ENCODE measurements at regions of chr14 and their contacts with region 1.

Region 1: GRCh38 chr14:34714320-34715126 is at the start of gene CFL2:
- DNase-seq: peak; percentile 72 to 86 (median 80)
- H3K4me3 ChIP-seq: peak within 1 kb of the TSS; percentile 77 to 89 (median 83)
- H3K27ac ChIP-seq: peak within 1 kb of the TSS; percentile 66 to 85
- H3K4me1 ChIP-seq: peaks cover 2 to 23% (median 15%) of the 10 kb centered on the region in 4 experiments
- H3K27me3 ChIP-seq: peaks cover 0 to 2% (median 0%) of the 10 kb centered on the region in 5 experiments

Region 2: GRCh38 chr14:34668111-34668510 is 46.4 kb before region 1 on chr14:
- CTCF ChIA-PET with region 1: interaction called, 39 read pairs
- POLR2A ChIA-PET with region 1: no interaction called
- DNase-seq: no peak
- H3K4me3 ChIP-seq: no peak overlapping the region
- H3K27ac ChIP-seq: no peak overlapping the region
- H3K4me1 ChIP-seq: peaks cover 4 to 12% (median 11%) of the 10 kb centered on the region in 4 experiments
- H3K27me3 ChIP-seq: no peaks in the 10 kb centered on the region

Region 3: GRCh38 chr14:34797747-34798583 is 83.4 kb after region 1 on chr14:
- CTCF ChIA-PET with region 1: no interaction called
- POLR2A ChIA-PET with region 1: no interaction called
- DNase-seq: no peak
- H3K4me3 ChIP-seq: no peak overlapping the region
- H3K27ac ChIP-seq: no peak overlapping the region
- H3K4me1 ChIP-seq: no peaks in the 10 kb centered on the region
- H3K27me3 ChIP-seq: no peaks in the 10 kb centered on the region